Activated naive CD4-positive, alpha-beta T cell treated with anti-CD3 and anti-CD28 coated beads for 36 hours (primary cell): ENCODE measurements at regions of chr7 and their contacts with region 1.

Region 1: GRCh38 chr7:149771721-149772240 is 1.6 kb downstream of the ZNF467 start:
- DNase-seq: peak; percentile 88
- H3K4me3 Mint-ChIP-seq: peak overlapping the region; percentile 71
- H3K27ac Mint-ChIP-seq: no peak overlapping the region
- H3K4me1 Mint-ChIP-seq: peaks cover 6% of the 10 kb centered on the region
- H3K27me3 Mint-ChIP-seq: no peaks in the 10 kb centered on the region

Region 2: DNA sequence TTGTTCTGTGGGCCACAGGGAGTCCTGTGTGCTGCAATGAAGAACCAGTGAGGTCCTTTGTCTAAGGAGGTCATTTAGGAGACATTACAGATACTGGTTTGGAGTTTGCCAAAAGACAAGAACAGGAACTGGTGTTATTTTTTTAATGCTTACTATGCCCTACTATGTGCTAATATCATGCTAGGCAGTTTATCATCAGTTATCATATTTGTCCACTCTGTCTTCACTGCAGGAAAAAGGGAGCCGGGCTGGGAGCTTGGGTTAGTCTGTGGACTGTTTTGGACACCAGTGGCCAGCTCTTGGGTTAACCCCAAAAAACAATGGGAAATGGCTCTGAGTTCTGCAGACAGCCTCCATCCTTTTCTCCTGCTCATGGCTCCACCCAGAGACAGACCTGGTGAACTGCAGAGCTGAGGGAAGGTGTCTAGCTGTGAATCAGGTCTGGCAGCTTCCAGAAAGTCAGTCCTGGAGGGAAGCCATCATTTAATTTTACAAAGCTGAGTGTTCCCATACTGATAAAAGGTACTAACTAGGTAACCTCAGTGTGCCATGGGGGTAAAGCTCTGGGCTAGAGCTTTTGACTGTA is 173.0 kb before region 1 on chr7:
- CTCF ChIA-PET with region 1: no interaction called
- intact Hi-C with region 1: loop called (anchors 2 kb)
- DNase-seq: peak; percentile 69
- H3K4me3 Mint-ChIP-seq: no peak overlapping the region
- H3K27ac Mint-ChIP-seq: peak overlapping the region; percentile 51
- H3K4me1 Mint-ChIP-seq: peaks cover 36% of the 10 kb centered on the region
- H3K27me3 Mint-ChIP-seq: no peaks in the 10 kb centered on the region

Region 3: DNA sequence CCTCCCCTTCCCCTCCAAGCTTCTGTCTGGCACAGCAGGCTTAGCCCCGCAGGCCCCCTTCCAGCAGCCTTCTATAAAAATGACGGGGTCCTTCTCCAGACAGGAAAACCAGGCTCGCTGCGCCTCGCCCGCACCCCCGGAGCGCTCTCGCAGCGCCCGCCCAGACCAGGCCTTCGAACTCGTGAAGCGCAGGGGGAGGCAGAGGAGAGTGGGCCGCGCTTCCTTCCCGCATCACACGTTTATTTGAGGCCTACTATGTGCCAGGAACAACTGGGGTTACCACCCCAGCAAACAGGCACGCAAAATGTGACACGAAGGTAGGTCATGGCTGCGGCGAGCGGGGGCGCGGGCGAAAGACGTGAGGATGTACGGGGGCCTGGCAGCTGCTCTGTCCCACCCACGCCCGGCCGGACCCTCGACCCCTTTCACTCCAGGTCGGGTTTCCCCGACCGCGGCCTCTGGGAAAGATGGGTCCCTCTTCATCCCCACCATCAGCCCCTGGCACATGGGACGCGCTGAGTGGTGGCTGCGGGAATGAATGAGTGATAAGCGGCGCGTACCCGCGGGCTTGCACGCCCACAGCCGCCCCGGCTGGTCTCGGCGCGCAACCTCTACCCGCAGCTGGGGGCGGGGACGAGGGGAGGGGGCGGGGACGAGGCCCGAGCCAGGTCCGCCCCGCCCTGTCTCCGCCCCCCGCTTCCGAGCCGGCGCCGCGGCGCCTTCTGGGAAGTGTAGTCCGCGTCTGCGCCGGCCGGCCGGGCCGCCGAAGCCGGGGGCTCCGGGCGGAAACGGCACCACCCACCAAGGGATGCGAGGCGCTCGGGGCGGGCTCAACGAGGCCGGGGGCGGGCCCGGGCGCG is 57.5 kb before region 1 on chr7:
- CTCF ChIA-PET with region 1: interaction called, 3 read pairs
- intact Hi-C with region 1: loop called (anchors 1 kb)
- DNase-seq: peak; percentile 94
- H3K4me3 Mint-ChIP-seq: peak overlapping the region; percentile 73
- H3K27ac Mint-ChIP-seq: no peak overlapping the region
- H3K4me1 Mint-ChIP-seq: peaks cover 17% of the 10 kb centered on the region
- H3K27me3 Mint-ChIP-seq: no peaks in the 10 kb centered on the region

Region 4: GRCh38 chr7:149838224-149838947 is 66.6 kb after region 1 on chr7 and contains the start of gene ZNF862:
- CTCF ChIA-PET with region 1: interaction called, 3 read pairs
- intact Hi-C with region 1: loop called (anchors 1 kb)
- DNase-seq: peak; percentile 96
- H3K4me3 Mint-ChIP-seq: peak within 1 kb of the TSS; percentile 76
- H3K27ac Mint-ChIP-seq: peak within 1 kb of the TSS; percentile 80
- H3K4me1 Mint-ChIP-seq: peaks cover 26% of the 10 kb centered on the region
- H3K27me3 Mint-ChIP-seq: no peaks in the 10 kb centered on the region
- total RNA-seq, gene ZNF862: 17.6 to 19.4 TPM

Region 5: DNA sequence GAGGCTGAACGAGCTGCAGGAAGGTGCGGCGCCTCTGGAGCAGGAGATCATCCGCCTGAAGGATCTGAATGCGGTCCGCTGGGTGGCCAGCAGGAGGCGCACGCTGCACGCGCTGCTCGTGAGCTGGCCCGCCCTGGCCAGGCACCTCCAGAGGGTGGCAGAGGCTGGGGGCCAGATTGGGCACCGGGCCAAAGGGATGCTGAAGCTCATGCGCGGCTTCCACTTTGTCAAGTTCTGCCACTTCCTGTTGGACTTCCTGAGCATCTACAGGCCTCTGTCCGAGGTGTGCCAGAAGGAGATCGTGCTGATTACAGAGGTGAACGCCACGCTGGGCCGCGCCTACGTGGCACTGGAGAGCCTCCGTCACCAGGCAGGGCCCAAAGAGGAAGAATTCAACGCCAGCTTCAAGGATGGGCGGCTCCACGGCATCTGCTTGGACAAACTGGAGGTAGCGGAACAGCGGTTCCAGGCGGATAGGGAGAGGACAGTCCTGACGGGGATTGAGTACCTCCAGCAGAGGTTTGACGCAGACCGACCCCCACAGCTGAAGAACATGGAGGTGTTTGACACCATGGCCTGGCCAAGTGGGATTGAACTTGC is 89.8 kb after region 1 on chr7:
- CTCF ChIA-PET with region 1: no interaction called
- intact Hi-C with region 1: loop called (anchors 2 kb)
- DNase-seq: no peak
- H3K4me3 Mint-ChIP-seq: no peak overlapping the region
- H3K27ac Mint-ChIP-seq: no peak overlapping the region
- H3K4me1 Mint-ChIP-seq: peaks cover 57% of the 10 kb centered on the region
- H3K27me3 Mint-ChIP-seq: no peaks in the 10 kb centered on the region